ENCODE measurements at regions of chr1 and their contacts with region 1.

Region 1: DNA sequence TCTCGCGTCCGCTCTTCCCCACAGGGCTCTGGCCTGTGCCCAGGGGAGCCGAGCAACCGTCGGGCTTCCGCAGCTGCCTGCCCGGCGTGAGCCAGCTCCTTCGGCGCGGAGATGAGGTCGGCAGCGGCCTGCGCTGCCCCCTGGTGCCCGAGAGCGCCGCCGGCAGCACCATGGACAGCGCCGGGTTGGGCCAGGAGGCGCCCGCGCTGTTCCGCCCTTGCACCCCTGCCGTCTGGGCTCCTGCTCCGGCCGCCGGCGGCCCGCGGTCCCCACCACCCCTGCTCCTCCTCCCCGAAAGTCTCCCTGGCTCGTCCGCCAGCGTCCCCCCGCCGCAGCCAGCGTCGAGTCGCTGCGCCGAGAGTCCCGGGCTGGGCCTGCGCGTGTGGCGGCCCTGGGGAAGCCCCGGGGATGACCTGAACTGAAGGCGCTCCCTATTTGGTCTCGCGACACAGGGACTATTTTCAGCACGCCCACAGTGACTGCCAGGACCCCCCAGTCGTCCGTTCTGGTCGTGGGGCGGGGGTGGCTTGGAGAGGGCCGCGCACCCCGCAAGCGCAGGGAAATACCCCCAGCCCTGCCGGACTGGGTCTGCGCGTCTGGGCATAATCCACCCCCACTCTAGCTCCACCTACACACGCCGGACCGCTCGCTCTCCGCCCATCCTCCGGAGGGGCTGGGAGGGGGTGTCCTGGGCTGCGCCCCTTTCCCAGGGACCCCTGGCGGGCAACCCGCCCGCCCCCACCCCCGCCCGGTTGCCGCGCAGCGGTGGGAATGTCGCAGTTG is 1.3 kb downstream of the HES3 start:
- DNase-seq: peak; percentile 78
- H3K4me3 ChIP-seq: peak overlapping the region in 1 of 4 donors; percentile 28
- H3K27ac ChIP-seq: no peak overlapping the region
- H3K4me1 ChIP-seq: peaks cover 19 to 44% (median 41%) of the 10 kb centered on the region in 4 donors
- H3K27me3 ChIP-seq: peaks cover 96% of the 10 kb centered on the region
- CTCF ChIP-seq: peak; percentile 61 to 92 (median 84)
- EP300 ChIP-seq: no peak
- POLR2A ChIP-seq: no peak

Region 2: GRCh38 chr1:5338466-5338865 is 906.8 kb before region 1 on chr1:
- in situ Hi-C with region 1: no loop called
- intact Hi-C with region 1: no loop called
- DNase-seq: no peak
- H3K4me3 ChIP-seq: no peak overlapping the region
- H3K27ac ChIP-seq: no peak overlapping the region
- H3K4me1 ChIP-seq: no peaks in the 10 kb centered on the region
- H3K27me3 ChIP-seq: no peaks in the 10 kb centered on the region
- CTCF ChIP-seq: no peak
- EP300 ChIP-seq: no peak
- POLR2A ChIP-seq: no peak

Region 3: DNA sequence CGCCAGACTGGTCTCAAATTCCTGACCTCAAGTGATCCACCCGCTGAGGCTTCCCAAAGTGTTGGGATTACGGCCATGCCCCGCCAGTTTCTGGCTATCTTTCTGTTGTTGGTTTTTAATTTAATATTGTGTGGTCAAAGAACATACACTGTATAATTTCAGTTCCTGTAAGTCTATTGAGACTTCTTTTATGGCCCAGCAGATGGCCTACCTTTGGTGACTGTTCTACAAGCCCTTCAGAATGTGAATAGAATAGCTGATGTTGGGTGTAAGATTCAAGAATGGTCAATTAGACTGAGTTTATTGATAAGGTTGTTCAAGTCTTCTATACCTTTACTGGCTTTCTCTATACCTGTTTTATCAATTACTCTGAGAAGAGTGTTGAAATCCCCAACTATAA is 163.8 kb after region 1 on chr1:
- in situ Hi-C with region 1: loop called in 2 of 4 experiments (anchors 10 to 25 kb)
- intact Hi-C with region 1: loop called (anchors 5 kb)
- DNase-seq: no peak
- H3K4me3 ChIP-seq: no peak overlapping the region
- H3K27ac ChIP-seq: peak overlapping the region in 1 of 4 donors; percentile 13
- H3K4me1 ChIP-seq: peaks cover 0 to 16% (median 9%) of the 10 kb centered on the region in 4 donors
- H3K27me3 ChIP-seq: peaks cover 5% of the 10 kb centered on the region
- CTCF ChIP-seq: no peak
- EP300 ChIP-seq: no peak
- POLR2A ChIP-seq: no peak

Region 4: DNA sequence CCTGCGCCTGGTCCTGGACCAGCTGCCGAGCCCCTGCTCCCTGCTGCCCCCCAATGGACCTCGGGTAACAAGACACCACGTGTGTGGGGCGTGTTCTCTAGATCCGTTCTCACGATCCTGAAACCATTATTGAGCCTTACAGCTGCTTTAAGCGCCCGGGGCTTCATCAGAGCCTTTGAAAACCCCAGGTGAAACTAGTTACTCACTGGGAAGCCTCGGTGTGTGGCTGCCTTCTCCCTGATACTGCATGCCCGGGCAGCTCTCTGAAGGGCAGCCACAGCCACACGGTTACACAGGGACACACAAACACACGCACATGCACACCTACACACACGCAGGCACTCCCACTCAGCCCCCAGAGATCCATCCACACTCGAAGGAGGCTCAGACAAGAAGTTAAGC is 169.2 kb after region 1 on chr1:
- in situ Hi-C with region 1: loop called in 2 of 4 experiments (anchors 10 to 25 kb)
- intact Hi-C with region 1: loop called (anchors 5 kb)
- DNase-seq: peak; percentile 56
- H3K4me3 ChIP-seq: no peak overlapping the region
- H3K27ac ChIP-seq: peak overlapping the region; percentile 45 to 73 (median 55)
- H3K4me1 ChIP-seq: peaks cover 10 to 49% (median 36%) of the 10 kb centered on the region in 4 donors
- H3K27me3 ChIP-seq: peaks cover 57% of the 10 kb centered on the region
- CTCF ChIP-seq: peak in 4 of 5 experiments; percentile 13 to 30 (median 30)
- EP300 ChIP-seq: no peak
- POLR2A ChIP-seq: no peak